Heart right ventricle (tissue), 16 donors: ENCODE measurements at regions of chr19 and their contacts with region 1.

Region 1: DNA sequence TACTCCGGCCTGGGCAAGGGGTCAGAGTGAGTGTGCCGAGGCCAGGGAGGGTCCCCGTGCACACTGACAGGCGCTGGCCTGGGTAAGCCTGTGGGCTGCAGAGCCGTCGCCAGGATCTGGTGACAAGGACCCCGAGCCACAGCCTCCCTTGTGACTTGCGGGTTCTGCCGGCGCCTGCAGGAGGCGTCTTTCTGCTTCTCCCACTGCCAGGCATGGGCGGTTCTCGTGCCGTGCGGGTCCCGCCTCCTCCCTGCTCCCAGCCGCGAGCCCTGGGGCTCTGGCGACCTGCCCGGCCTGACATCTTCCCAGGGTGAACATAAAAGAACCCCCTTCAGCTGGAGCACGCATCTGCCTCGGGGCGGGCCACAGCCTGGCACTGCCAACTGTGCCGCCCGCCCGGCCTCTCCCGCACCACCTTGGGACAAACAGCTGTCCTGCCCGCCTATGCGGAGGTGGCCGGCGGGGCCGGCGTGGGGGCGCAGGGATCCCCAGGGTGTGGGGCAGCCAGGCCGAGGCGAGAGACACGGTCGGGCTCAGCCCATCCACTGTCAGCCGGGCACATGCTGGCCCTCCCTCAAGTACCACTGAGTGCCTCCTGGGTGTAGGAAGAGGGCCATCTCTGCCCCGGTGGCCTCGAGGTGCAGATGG is 1.5 kb upstream of the HCN2 start:
- DNase-seq: peak; percentile 69 to 75
- ATAC-seq: peak; percentile 5 to 63 (median 22)
- H3K4me3 ChIP-seq: peak overlapping the region in 3 of 10 donors; percentile 12 to 14 (median 13)
- H3K27ac ChIP-seq: peak overlapping the region in 3 of 10 donors; percentile 5 to 56 (median 34)
- H3K4me1 ChIP-seq: peaks cover 4 to 42% (median 23%) of the 10 kb centered on the region in 9 donors
- H3K27me3 ChIP-seq: peaks cover 27 to 53% (median 50%) of the 10 kb centered on the region in 7 donors
- CTCF ChIP-seq: peak; percentile 20 to 64 (median 49)

Region 2: GRCh38 chr19:737581-738093 is 149.4 kb after region 1 on chr19:
- intact Hi-C with region 1: loop called in 2 of 10 experiments (anchors 5 to 10 kb)
- DNase-seq: peak in 1 of 2 donors; percentile 59
- ATAC-seq: peak in 7 of 8 donors; percentile 16 to 48 (median 40)
- H3K4me3 ChIP-seq: no peak overlapping the region
- H3K27ac ChIP-seq: no peak overlapping the region
- H3K4me1 ChIP-seq: peaks cover 0 to 9% (median 0%) of the 10 kb centered on the region in 9 donors
- H3K27me3 ChIP-seq: no peaks in the 10 kb centered on the region
- CTCF ChIP-seq: peak; percentile 29 to 68 (median 58)

Region 3: GRCh38 chr19:756232-756631 is 168.0 kb after region 1 on chr19:
- intact Hi-C with region 1: no loop called
- DNase-seq: no peak
- ATAC-seq: no peak
- H3K4me3 ChIP-seq: no peak overlapping the region
- H3K27ac ChIP-seq: no peak overlapping the region
- H3K4me1 ChIP-seq: peaks cover 0 to 12% (median 0%) of the 10 kb centered on the region in 9 donors
- H3K27me3 ChIP-seq: peaks cover 0 to 9% (median 7%) of the 10 kb centered on the region in 7 donors
- CTCF ChIP-seq: no peak